ENCODE measurements at regions of chr2 and their contacts with region 1.

Region 1: GRCh38 chr2:64730551-64731262 is 77.0 kb upstream of the SERTAD2 start:
- DNase-seq: peak; percentile 69
- ATAC-seq: peak; percentile 39
- H3K4me3 ChIP-seq: peak overlapping the region; percentile 58
- H3K27ac ChIP-seq: peak overlapping the region; percentile 83
- H3K4me1 ChIP-seq: peaks cover 48% of the 10 kb centered on the region
- H3K27me3 ChIP-seq: no peaks in the 10 kb centered on the region
- CTCF ChIP-seq: no peak
- EP300 ChIP-seq: no peak
- POLR2A ChIP-seq: no peak
- RAD21 ChIP-seq: no peak

Region 2: GRCh38 chr2:64448041-64448426 is 282.7 kb before region 1 on chr2:
- CTCF ChIA-PET with region 1: no interaction called
- POLR2A ChIA-PET with region 1: no interaction called
- RAD21 ChIA-PET with region 1: no interaction called
- SMC1A ChIA-PET with region 1: no interaction called
- in situ Hi-C with region 1: no loop called
- intact Hi-C with region 1: no loop called
- DNase-seq: no peak
- ATAC-seq: no peak
- H3K4me3 ChIP-seq: no peak overlapping the region
- H3K27ac ChIP-seq: no peak overlapping the region
- H3K4me1 ChIP-seq: 0 out of 2 replicates have a peak, but pooled peaks cover 5% of the 10 kb centered on the region
- H3K27me3 ChIP-seq: no peaks in the 10 kb centered on the region
- CTCF ChIP-seq: no peak
- EP300 ChIP-seq: no peak
- POLR2A ChIP-seq: no peak
- RAD21 ChIP-seq: no peak

Region 3: GRCh38 chr2:64661741-64662169 is 69.0 kb before region 1 on chr2:
- CTCF ChIA-PET with region 1: interaction called, 6 read pairs
- POLR2A ChIA-PET with region 1: interaction called, 11 read pairs
- RAD21 ChIA-PET with region 1: interaction called, 11 read pairs
- SMC1A ChIA-PET with region 1: interaction called, 945 read pairs
- in situ Hi-C with region 1: no loop called
- intact Hi-C with region 1: no loop called
- DNase-seq: no peak
- ATAC-seq: peak; percentile 81
- H3K4me3 ChIP-seq: no peak overlapping the region
- H3K27ac ChIP-seq: peak overlapping the region; percentile 56; the same call in 1 of the 2 replicates
- H3K4me1 ChIP-seq: peaks cover 40% of the 10 kb centered on the region
- H3K27me3 ChIP-seq: no peaks in the 10 kb centered on the region
- CTCF ChIP-seq: peak in 1 of 3 experiments; percentile 23; a peak in 1 of 6 replicates
- EP300 ChIP-seq: peak in 1 of 2 experiments; percentile 33; a peak in 1 of 4 replicates
- POLR2A ChIP-seq: no peak
- RAD21 ChIP-seq: no peak

Region 4: DNA sequence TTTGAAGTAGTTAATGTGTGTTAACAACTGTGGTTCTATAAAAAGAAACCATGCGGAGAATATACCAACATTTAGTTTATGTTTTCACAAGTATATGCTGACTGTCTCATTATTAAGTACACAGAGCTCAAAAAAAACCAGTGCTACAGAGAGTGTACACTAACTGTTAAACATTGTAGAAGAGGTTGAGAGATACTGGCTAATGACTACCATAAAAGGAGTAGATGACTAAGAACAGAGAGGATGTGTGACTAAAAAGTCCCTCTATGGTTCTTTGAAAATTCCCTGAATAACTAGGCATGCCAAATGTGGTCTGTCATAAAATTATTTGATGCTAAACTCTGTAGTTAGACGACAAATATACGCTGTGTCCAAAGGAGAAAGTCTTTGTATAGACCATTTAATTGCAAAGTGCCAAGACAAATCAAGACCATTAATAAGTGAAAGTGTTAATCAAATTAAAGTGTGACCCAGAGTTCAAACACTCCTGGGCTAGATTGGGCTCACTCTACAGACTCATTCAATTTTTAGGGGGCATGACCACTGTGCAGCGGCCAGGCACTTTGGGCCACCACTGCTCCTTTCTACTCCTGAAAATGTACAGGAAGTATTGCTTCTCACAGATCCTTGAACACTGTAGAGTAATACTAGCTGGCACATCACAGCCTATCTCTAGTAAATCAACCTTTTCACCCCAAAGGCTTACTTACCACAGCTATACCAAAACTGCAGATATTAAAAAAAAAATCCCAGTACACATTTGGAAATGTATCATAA is 31.9 kb before region 1 on chr2:
- CTCF ChIA-PET with region 1: interaction called, 22 read pairs
- POLR2A ChIA-PET with region 1: interaction called, 35 read pairs
- RAD21 ChIA-PET with region 1: interaction called, 49 read pairs
- SMC1A ChIA-PET with region 1: interaction called, 105 read pairs
- in situ Hi-C with region 1: no loop called
- intact Hi-C with region 1: loop called (anchors 1 kb)
- DNase-seq: peak; percentile 83
- ATAC-seq: peak; percentile 90
- H3K4me3 ChIP-seq: no peak overlapping the region; the same call in 1 of the 2 replicates
- H3K27ac ChIP-seq: peak overlapping the region; percentile 98
- H3K4me1 ChIP-seq: peaks cover 53% of the 10 kb centered on the region
- H3K27me3 ChIP-seq: no peaks in the 10 kb centered on the region
- CTCF ChIP-seq: no peak
- EP300 ChIP-seq: peak; percentile 41 to 84; a peak in 2 of 4 replicates
- POLR2A ChIP-seq: no peak
- RAD21 ChIP-seq: no peak

Region 5: GRCh38 chr2:64713686-64714085 is 17.0 kb before region 1 on chr2:
- CTCF ChIA-PET with region 1: interaction called, 13 read pairs
- POLR2A ChIA-PET with region 1: interaction called, 5 read pairs
- RAD21 ChIA-PET with region 1: interaction called, 10 read pairs
- SMC1A ChIA-PET with region 1: interaction called, 11 read pairs
- in situ Hi-C with region 1: no loop called
- intact Hi-C with region 1: no loop called
- DNase-seq: no peak
- ATAC-seq: no peak
- H3K4me3 ChIP-seq: no peak overlapping the region
- H3K27ac ChIP-seq: no peak overlapping the region
- H3K4me1 ChIP-seq: peaks cover 5% of the 10 kb centered on the region
- H3K27me3 ChIP-seq: no peaks in the 10 kb centered on the region
- CTCF ChIP-seq: no peak
- EP300 ChIP-seq: no peak
- POLR2A ChIP-seq: no peak
- RAD21 ChIP-seq: no peak

Region 6: DNA sequence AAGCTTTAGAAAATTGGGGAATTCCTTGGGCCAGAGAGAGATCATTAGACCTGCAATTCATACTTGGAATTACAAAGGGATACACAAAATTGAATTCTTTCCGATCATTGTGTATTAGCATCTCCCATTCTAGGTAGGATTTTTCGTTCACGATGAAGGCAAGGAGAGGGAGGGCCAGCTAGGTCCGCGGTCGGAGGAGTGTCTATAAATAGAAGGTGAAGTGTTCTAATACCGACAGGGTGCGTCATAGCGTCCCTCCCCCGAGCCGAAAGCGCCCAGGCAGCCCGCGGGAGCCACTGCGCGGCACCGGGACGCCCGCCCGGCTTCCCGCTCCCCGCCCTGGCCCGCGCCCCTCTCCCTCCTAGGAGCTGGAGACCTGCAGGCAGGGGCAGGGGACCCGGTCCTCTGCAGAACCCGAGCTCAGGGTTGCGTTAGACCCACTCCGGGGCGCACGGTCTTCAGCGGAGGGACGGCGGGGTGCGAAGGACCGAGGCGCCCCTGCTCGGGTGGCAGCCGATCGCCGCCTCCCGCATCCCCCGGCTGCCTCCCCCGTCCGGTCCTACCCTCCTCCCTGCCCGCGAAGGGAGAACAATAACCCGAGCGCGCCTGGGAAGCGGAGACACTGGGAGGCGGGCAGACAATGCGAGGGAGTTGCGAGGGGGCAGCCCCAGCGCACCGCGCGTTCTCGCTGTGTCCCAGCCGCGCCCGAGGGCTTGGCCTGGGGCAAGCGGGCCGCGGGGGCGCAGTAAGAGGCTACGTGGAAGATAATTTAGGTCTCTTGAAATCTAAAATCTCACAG is 37.2 kb after region 1 on chr2:
- CTCF ChIA-PET with region 1: interaction called, 8 read pairs
- POLR2A ChIA-PET with region 1: interaction called, 6 read pairs
- RAD21 ChIA-PET with region 1: interaction called, 22 read pairs
- SMC1A ChIA-PET with region 1: interaction called, 14 read pairs
- in situ Hi-C with region 1: no loop called
- intact Hi-C with region 1: no loop called
- DNase-seq: no peak
- ATAC-seq: peak; percentile 94
- H3K4me3 ChIP-seq: peak overlapping the region; percentile 84
- H3K27ac ChIP-seq: peak overlapping the region; percentile 87
- H3K4me1 ChIP-seq: peaks cover 12% of the 10 kb centered on the region
- H3K27me3 ChIP-seq: no peaks in the 10 kb centered on the region
- CTCF ChIP-seq: peak in 2 of 3 experiments; percentile 7 to 29; a peak in 2 of 6 replicates
- EP300 ChIP-seq: peak in 1 of 2 experiments; percentile 40; a peak in 2 of 4 replicates
- POLR2A ChIP-seq: peak; percentile 78
- RAD21 ChIP-seq: no peak

Region 7: DNA sequence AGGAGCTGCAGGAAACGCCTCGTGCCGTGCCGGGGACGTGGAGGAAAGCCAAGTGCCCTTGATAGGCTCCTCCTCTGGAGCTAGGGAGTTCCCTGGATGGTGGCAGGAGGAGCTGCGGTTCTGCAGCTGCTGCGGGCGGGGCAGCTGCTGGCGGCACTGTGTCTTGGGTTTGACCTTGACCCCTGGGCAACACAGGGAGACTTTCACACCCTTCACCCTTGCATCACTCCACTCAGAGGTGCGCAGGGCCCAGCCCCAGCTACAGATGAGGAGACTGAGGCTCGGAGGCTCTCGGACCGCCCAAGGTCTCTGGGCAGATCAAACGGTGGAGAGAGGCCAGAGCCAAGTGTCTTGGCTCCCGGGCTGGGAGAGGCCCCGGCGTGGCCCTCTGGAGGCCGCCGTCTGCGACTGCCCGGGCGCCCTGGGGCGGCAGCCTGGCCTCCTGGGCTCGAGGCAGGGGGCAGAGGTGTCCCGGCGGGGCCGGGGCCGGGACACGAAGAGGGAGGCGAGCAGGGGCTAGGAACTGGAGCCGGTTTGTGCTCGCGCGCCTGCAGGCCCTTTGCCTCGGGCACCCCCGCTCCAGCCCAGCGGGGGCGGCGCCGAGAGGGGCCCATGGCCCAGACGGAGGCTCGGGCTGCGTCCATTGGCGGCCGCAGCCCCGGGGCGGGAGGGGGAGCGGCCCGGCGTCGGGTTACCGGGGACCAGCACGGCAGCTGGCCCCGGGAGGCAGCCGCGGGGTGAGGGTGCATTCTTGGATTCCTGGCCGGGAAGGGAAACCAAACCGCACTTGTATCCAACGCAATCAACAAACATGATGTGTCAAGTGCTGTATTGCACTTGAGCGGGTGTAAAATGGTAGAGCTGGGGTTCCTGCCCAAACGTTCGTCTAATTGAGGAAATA is 128.9 kb after region 1 on chr2:
- CTCF ChIA-PET with region 1: interaction called, 3 read pairs
- POLR2A ChIA-PET with region 1: interaction called, 4 read pairs
- RAD21 ChIA-PET with region 1: interaction called, 9 read pairs
- SMC1A ChIA-PET with region 1: interaction called, 11 read pairs
- in situ Hi-C with region 1: no loop called
- intact Hi-C with region 1: loop called (anchors 2 kb)
- DNase-seq: no peak
- ATAC-seq: peak; percentile 53
- H3K4me3 ChIP-seq: peak overlapping the region; percentile 65
- H3K27ac ChIP-seq: peak overlapping the region; percentile 91
- H3K4me1 ChIP-seq: peaks cover 54% of the 10 kb centered on the region
- H3K27me3 ChIP-seq: no peaks in the 10 kb centered on the region
- CTCF ChIP-seq: no peak
- EP300 ChIP-seq: no peak
- POLR2A ChIP-seq: peak; percentile 40
- RAD21 ChIP-seq: no peak

Region 8: GRCh38 chr2:64888591-64889309 is 158.0 kb after region 1 on chr2:
- CTCF ChIA-PET with region 1: no interaction called
- POLR2A ChIA-PET with region 1: no interaction called
- RAD21 ChIA-PET with region 1: no interaction called
- SMC1A ChIA-PET with region 1: no interaction called
- in situ Hi-C with region 1: no loop called
- intact Hi-C with region 1: no loop called
- DNase-seq: no peak
- ATAC-seq: no peak
- H3K4me3 ChIP-seq: no peak overlapping the region
- H3K27ac ChIP-seq: no peak overlapping the region
- H3K4me1 ChIP-seq: no peaks in the 10 kb centered on the region
- H3K27me3 ChIP-seq: no peaks in the 10 kb centered on the region
- CTCF ChIP-seq: no peak
- EP300 ChIP-seq: no peak
- POLR2A ChIP-seq: no peak
- RAD21 ChIP-seq: no peak

Region 9: DNA sequence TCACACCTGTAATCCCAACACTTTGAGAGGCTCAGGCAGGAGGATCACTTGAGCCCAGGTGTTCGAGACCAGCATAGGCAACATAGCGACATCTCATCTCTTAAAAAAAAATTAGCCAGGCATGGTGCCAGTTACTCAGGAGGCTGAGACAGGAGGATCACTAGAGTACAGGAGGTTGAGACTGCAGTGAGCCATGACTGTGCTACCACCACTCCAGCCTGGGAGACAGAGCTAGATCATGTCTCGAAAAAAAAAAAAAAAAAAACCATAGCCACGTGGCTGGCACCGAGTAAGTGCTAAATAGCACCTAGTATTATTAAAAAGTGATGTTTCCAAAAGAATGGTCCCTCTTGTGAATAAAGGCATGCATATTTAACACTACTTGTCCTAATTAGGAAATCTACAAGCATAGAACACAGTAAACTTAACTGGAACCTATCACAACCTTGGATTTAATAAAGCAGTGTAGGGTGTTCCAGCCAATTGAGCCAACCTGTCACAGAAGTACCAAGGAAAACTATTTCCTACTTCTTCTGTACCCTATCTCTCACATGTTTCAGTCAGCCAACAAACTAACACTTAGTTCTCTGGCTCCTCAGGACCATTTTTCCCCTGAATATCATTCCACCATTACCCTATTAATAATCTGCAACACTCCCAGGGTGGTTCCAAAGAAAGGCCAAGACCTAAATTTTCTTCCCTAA is 390.4 kb after region 1 on chr2:
- CTCF ChIA-PET with region 1: no interaction called
- POLR2A ChIA-PET with region 1: no interaction called
- RAD21 ChIA-PET with region 1: no interaction called
- SMC1A ChIA-PET with region 1: no interaction called
- in situ Hi-C with region 1: no loop called
- intact Hi-C with region 1: no loop called
- DNase-seq: no peak
- ATAC-seq: no peak
- H3K4me3 ChIP-seq: no peak overlapping the region
- H3K27ac ChIP-seq: no peak overlapping the region
- H3K4me1 ChIP-seq: no peaks in the 10 kb centered on the region; the same call in 1 of the 2 replicates
- H3K27me3 ChIP-seq: no peaks in the 10 kb centered on the region
- CTCF ChIP-seq: no peak
- EP300 ChIP-seq: no peak
- POLR2A ChIP-seq: no peak
- RAD21 ChIP-seq: no peak

Region 10: DNA sequence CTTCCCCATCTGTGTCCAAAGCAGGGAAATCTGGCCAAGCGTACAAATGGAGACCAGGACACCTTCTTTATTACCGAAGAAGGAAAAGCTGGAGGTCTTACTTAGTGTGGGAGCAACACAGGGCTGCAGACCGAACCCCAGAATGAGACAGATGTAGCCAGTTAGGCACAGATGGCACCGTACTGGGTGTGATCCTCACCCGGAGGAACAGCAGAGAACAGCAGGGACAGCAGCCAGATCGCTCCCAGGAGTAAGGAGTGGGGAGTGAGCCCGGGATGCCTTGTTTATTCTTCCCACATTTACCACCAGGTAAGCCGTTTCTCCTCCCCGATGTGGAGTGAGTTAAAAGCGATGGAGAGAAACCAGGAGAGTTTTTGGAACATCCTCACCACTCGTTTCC is 852.4 kb after region 1 on chr2:
- CTCF ChIA-PET with region 1: no interaction called
- POLR2A ChIA-PET with region 1: no interaction called
- RAD21 ChIA-PET with region 1: no interaction called
- SMC1A ChIA-PET with region 1: no interaction called
- in situ Hi-C with region 1: no loop called
- intact Hi-C with region 1: no loop called
- DNase-seq: no peak
- ATAC-seq: no peak
- H3K4me3 ChIP-seq: no peak overlapping the region
- H3K27ac ChIP-seq: no peak overlapping the region
- H3K4me1 ChIP-seq: peaks cover 3% of the 10 kb centered on the region; the same call in 1 of the 2 replicates
- H3K27me3 ChIP-seq: no peaks in the 10 kb centered on the region; a peak in 1 of 4 replicates
- CTCF ChIP-seq: no peak
- EP300 ChIP-seq: no peak
- POLR2A ChIP-seq: no peak
- RAD21 ChIP-seq: no peak

Measured in GM12878 (cell line).